GM10248 (cell line): ENCODE measurements at regions of chr3 and their contacts with region 1.

Region 1: DNA sequence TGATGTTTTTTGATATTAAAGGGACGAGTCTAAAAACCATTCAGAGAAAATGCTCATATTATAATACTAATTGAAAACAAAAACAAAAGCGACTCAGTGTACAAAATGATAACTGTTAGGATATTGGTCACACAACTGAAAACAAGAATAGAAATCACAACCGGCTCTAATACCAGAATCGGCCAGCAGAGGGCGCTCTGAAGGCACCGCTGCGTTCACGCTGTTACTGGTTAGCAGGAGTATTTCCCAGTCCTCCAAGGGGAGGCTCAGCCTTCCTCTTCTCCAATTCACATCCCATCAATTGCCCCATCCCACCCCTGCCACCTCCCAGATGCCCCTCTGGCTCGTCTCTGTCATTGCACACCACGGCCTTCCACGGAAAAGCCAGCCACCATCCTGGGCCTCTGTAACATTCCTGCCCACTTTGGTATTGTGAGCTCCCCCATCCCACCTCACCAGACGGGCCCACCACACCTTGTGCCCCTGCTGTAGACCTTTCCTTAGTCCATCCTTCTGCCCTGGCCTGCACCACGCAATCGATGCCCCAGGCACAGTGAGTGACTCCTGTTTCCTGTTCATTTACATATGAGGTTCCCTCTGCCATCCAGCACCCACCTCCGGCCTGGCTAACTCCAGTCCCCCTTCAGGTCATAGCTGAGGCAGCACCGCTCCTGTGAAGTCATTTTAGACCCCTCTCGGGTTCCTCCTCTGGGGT is 8.5 kb downstream of the FAM107A start:
- DNase-seq: peak; percentile 75
- CTCF ChIP-seq: peak; percentile 83

Region 2: DNA sequence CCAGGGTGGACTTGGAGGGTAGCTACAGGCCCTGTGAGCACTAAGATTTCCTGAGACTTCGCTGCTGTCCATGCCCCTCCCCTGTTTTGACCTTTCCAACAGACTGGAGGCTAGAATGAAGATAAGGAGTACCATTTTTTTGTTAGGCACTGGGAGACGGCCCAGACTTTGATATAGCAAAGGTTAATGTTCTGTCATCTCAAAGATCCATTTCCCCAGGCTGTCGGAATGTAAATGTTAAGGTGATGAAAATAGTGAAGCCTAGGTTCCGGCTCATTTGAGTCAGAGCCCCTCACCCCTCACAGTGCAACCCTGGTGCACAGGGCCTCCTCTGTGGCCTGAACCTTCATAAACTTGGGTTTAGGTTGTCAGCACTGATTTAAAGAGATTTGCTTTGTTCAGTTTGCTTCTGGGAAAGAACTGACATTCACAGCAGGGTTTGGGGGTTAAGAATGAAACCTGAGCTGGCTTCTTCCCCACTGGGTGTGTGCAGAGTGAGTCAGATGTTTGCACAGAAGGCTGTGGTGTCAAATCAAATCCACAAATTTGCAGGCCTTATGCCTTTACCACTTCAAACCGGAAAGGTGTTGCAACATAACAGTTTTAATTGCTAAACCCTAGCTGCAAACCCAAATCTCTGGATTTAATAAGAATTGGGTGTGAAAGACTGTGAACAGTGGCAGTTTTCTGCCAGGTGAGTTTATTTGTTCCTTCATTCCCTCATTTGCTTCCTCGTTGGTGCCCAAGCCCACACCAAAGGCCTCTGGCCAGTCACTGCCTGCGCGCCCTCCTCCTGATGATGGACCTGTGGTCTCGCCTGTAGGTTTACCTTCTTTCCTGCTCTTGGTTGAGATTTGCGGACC is 97.5 kb before region 1 on chr3:
- CTCF ChIA-PET with region 1: no interaction called
- POLR2A ChIA-PET with region 1: no interaction called
- DNase-seq: peak; percentile 44
- CTCF ChIP-seq: no peak

Region 3: DNA sequence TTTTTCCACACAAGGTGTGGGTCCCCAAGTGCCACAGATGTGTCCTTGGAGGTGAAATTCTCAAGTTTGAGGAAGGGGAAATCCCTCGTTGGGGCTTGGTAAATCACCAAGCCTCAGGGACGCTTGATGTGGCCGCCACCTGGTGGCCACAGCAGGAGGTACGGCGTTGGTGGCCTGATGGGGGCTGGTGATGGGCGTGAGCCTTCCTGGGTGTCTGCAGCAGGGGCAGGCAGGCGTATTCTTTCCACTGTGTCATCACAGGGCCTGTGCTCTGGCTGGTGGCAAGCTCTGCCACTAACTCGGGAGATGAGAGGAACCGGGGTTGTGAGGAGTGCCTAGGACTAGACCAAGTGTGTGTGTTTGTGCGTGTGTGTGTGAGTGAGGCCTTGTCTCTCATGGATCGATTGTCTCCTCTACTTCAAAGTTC is 35.9 kb before region 1 on chr3:
- CTCF ChIA-PET with region 1: interaction called, 20 read pairs
- POLR2A ChIA-PET with region 1: no interaction called
- DNase-seq: peak; percentile 90
- CTCF ChIP-seq: peak; percentile 94

Region 4: DNA sequence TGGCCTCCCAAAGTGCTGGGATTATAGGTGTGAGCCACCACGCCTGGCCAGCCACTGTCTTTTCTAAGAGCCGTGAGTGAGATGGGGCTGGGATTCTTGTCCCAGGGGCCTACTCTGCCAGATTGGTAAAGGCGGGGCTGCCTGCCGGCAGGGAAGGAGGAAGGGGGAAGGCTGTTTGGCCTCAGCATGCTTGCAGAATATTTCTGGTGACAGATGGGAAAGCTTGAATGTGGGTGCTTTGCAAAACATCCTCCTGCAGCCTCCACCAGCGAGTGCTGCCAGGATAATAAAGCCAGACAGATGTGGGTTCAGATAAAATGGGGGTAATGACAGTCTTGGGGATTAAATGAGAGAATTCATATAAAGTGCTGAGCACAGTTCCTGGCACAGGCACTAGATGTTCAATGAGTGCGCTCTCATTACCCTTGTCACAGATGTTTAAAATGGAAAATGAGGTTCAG is 11.9 kb before region 1 on chr3:
- CTCF ChIA-PET with region 1: interaction called, 50 read pairs
- POLR2A ChIA-PET with region 1: no interaction called
- DNase-seq: no peak
- CTCF ChIP-seq: no peak

Region 5: GRCh38 chr3:58608648-58609047 is 39.9 kb after region 1 on chr3:
- CTCF ChIA-PET with region 1: interaction called, 15 read pairs
- POLR2A ChIA-PET with region 1: no interaction called
- DNase-seq: no peak
- CTCF ChIP-seq: no peak

Region 6: DNA sequence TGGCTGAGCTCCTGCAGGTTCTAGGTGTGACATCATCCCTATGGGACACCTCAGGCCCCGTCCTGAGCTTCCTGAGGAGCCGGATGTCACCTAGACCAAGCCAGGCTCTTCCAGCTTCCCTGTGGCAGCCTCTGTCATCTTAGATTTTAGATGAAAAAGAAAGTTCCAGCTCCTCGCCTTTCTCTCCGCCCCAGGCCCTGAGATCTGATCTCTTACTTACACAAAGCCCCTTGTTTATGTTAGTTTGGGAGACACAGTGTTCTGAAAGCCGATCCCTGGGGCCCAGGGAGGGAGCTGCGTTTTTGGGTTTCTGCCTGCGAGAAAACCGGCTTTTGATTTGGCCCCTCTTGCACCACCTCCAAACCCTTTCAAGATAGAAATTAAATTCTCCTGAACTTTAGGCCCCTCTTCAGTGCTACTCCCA is 48.6 kb after region 1 on chr3:
- CTCF ChIA-PET with region 1: interaction called, 10 read pairs
- POLR2A ChIA-PET with region 1: no interaction called
- DNase-seq: no peak
- CTCF ChIP-seq: no peak

Region 7: GRCh38 chr3:58640700-58641372 is 72.1 kb after region 1 on chr3:
- CTCF ChIA-PET with region 1: interaction called, 384 read pairs
- POLR2A ChIA-PET with region 1: no interaction called
- DNase-seq: peak; percentile 82
- CTCF ChIP-seq: peak; percentile 87